Motor neuron (in vitro differentiated cells): ENCODE measurements at regions of chr16 and their contacts with region 1.

Region 1: DNA sequence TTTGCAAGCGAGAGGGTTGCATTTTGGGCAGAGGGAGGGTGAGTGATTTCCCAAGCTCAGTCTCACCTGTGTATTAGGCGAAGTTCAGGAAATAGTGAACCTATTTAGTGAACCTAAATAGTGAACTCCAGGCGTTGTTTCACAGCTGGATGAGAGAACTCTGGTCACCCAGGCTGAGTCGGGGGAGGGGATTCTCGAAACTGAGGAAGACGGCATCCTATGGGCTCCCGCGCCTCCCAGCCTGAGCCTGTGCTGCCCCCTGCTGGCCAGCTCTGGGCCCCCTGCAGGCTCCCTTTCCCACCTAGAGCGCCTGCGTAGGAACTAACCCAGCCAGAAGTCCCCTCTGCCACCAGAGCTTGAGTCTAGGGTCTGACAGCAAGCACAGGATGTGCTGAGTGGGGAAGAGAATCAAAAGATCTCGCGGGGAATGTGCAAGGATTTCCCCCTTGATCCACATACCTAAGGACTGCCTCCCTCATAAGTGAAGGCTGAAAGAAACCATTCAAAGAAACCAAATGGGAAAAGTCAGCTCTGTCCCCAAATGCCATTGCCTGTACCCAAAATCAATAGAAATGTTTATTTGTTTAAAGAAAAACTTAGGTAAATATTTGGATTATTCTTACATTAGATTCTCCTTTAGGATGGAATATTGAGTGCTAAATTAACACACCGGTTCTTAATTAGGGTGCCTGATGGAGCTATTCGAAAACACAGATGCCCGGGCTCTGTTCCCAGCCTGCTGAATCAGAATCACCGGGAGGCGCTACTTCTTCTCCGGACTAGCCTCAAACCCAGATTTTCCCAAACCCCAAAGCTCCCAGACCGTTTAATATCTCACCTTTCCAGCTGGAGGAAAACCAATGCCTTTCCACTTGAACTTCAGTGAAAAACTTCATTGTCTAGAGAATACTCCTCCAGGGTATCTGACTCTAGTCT is 14.8 kb upstream of the MARVELD3 start:
- ATAC-seq: peak; percentile 94 to 100 (median 98)
- H3K4me3 ChIP-seq: no peak overlapping the region
- H3K27ac ChIP-seq: no peak overlapping the region
- H3K4me1 ChIP-seq: no peaks in the 10 kb centered on the region

Region 2: GRCh38 chr16:71249399-71249798 is 361.8 kb before region 1 on chr16:
- in situ Hi-C with region 1: no loop called
- ATAC-seq: no peak
- H3K4me3 ChIP-seq: no peak overlapping the region
- H3K27ac ChIP-seq: no peak overlapping the region
- H3K4me1 ChIP-seq: peaks cover 15 to 22% of the 10 kb centered on the region in 2 donors

Region 3: GRCh38 chr16:71412270-71413160 is 198.7 kb before region 1 on chr16:
- in situ Hi-C with region 1: loop called in 3 of 9 experiments (anchors 25 kb)
- ATAC-seq: peak; percentile 77 to 95 (median 90)
- H3K4me3 ChIP-seq: peak overlapping the region in 1 of 5 donors; percentile 17
- H3K27ac ChIP-seq: no peak overlapping the region
- H3K4me1 ChIP-seq: peaks cover 0 to 5% of the 10 kb centered on the region in 2 donors

Region 4: DNA sequence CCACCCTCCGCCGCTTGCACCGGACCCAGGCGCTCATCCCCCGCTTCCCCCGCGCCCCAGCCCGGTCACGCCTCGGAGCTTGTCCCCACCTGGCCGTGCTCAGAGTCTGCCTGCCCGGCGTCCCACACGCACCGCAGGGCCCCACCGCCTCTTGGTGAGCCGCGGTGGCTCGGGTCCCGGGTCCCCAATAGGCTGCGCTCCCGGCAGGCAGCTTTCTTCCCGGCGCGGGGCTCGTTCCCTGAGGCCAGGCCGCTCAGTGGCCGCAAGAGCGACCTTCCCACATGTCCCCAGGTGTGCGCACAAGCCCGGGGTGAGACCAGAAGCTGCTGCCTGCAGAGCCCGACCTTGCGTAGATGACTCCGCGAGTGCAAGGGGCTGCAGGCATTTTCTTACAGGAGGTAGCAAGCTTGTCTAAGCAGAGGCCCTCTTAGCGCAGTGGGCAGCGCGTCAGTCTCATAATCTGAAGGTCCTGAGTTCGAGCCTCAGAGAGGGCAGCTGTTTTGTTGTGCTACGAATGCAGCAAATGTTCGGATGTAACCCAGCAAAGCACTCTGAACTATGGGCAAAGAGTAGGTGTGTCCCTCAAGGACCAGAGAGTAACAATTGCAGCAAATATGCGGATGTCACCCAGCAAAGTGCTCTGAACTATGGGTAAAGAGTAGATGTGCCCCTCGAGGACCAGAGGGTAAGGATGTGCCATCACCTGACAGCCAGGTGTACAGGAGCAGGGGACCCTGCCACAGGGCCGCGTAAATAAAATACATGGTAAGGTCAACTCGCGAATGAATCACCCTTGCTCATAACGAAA is 184.9 kb before region 1 on chr16:
- in situ Hi-C with region 1: loop called in 4 of 9 experiments (anchors 25 kb)
- ATAC-seq: peak; percentile 79 to 93 (median 88)
- H3K4me3 ChIP-seq: peak overlapping the region; percentile 33 to 48 (median 40)
- H3K27ac ChIP-seq: peak overlapping the region in 1 of 2 donors; percentile 67
- H3K4me1 ChIP-seq: no peaks in the 10 kb centered on the region

Region 5: DNA sequence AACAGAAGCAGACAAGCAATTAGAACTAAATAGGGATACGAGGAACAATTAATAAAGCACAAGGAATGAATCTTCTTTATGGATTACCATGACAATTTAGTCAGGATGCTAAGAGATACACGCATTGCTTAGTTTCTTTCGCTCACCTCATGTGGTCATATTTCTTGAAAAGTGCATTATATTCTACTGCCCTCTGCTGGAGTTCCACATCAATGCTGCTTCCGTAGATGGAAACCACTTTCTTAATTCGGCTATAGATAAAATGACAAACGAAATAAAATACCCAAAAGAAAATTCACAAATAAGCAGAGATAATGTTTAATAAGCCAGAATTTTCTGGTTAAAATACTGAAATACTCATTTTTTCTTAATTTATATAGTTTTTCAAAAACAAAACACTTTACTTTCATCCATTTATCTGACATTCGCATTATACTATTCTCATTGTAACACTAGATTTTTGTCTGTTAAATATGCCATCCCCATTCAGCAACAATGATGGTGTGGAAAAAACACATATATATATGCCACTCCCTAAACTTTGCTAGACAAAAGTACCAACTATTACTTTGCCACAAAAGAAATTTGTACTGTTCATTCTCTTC is 135.3 kb after region 1 on chr16:
- in situ Hi-C with region 1: no loop called
- ATAC-seq: peak in 3 of 8 experiments; percentile 39 to 45 (median 41)
- H3K4me3 ChIP-seq: no peak overlapping the region
- H3K27ac ChIP-seq: no peak overlapping the region
- H3K4me1 ChIP-seq: no peaks in the 10 kb centered on the region